ENCODE measurements at regions of chr15 and their contacts with region 1.

Region 1: GRCh38 chr15:89087830-89088604 is at the start of gene ABHD2:
- DNase-seq: peak; percentile 99 to 100
- ATAC-seq: peak; percentile 90 to 96 (median 94)
- H3K4me3 ChIP-seq: peak within 1 kb of the TSS; percentile 79 to 98 (median 90)
- H3K27ac ChIP-seq: peak within 1 kb of the TSS; percentile 91 to 98 (median 96)
- H3K4me1 ChIP-seq: peaks cover 0 to 68% (median 46%) of the 10 kb centered on the region in 9 donors
- H3K27me3 ChIP-seq: no peaks in the 10 kb centered on the region
- CTCF ChIP-seq: no peak
- total RNA-seq, gene ABHD2: 74.9 to 201 (median 123) TPM

Region 2: DNA sequence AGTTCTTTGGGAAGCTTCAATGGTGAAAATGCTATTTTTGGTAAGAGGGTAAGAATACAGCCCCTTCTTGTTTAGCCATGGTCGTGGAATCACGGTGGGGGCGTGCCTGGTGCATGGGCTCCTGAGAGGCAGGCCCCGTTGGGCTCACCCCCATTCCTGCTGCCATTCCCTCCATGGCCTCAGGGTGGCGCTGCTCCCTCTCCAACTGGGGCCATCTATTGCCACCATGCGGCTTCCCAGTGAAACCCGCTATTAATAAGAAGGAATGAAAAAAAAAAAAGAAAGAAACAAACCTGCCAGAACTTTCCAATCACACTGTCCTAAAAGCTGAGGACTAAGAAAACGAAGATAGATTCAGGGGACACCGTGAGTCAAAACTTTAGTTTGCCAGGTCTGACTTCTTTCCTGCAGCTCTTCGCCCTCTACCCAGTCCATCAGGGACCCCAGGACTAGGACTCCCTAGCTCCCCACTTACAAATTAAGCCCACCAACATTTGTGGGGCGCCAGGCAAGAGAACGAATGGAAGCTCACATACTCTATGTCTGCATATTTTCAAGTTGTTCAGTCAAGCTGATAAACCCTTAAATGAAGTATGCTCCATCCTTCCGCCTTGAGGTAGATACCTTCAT is 30.4 kb before region 1 on chr15:
- intact Hi-C with region 1: no loop called
- DNase-seq: peak; percentile 81 to 86
- ATAC-seq: peak; percentile 87 to 94 (median 92)
- H3K4me3 ChIP-seq: no peak overlapping the region
- H3K27ac ChIP-seq: no peak overlapping the region
- H3K4me1 ChIP-seq: peaks cover 0 to 12% (median 6%) of the 10 kb centered on the region in 9 donors
- H3K27me3 ChIP-seq: no peaks in the 10 kb centered on the region
- CTCF ChIP-seq: peak; percentile 98 to 99 (median 99)

Region 3: GRCh38 chr15:89101302-89102191 is 13.5 kb after region 1 on chr15:
- intact Hi-C with region 1: loop called in 1 of 10 experiments (anchors 2 kb)
- DNase-seq: peak; percentile 54 to 82
- ATAC-seq: peak; percentile 76 to 90 (median 84)
- H3K4me3 ChIP-seq: no peak overlapping the region
- H3K27ac ChIP-seq: peak overlapping the region in 9 of 10 donors; percentile 74 to 98 (median 84)
- H3K4me1 ChIP-seq: peaks cover 20 to 98% (median 89%) of the 10 kb centered on the region in 9 donors
- H3K27me3 ChIP-seq: no peaks in the 10 kb centered on the region
- CTCF ChIP-seq: no peak

Region 4: DNA sequence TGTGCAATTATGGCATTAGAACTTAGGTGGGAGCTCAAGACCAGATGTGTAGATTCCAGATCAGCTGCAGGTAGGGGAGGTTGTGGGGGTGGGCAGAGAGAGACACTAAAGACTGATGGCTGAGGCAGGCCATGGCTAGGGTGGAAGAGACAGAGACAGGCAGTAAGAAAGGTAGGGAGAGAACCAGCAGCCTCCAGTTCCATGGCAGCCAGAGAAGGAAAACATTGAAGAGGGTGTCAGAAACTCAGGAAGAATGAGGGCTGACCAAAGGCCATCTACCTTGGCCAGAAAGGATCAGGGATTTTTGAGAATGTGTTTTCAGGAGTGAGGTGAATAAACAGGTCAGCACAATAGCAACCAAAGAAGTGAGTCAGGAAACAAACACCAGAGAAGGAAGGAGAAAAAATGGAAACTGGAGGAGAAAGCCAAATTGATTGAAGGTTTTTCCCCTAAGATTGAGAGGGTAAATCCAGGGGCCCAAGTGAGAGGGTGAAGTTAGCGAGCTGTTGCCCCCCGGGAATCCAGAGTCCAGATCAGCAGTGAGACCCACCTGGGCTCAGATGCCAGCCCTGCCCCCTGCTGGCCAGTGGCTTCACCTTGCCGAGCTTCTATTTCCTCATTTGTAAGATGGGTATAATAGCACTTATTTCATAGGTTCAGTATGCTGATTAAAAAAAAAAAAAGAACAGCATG is 41.3 kb after region 1 on chr15:
- intact Hi-C with region 1: loop called in 2 of 10 experiments (anchors 5 kb)
- DNase-seq: peak in 1 of 2 donors; percentile 39
- ATAC-seq: peak in 2 of 8 donors; percentile 26 to 27
- H3K4me3 ChIP-seq: no peak overlapping the region
- H3K27ac ChIP-seq: peak overlapping the region in 7 of 10 donors; percentile 28 to 88 (median 42)
- H3K4me1 ChIP-seq: peaks cover 12 to 87% (median 65%) of the 10 kb centered on the region in 9 donors
- H3K27me3 ChIP-seq: no peaks in the 10 kb centered on the region
- CTCF ChIP-seq: peak; percentile 30 to 71 (median 61)

Region 5: DNA sequence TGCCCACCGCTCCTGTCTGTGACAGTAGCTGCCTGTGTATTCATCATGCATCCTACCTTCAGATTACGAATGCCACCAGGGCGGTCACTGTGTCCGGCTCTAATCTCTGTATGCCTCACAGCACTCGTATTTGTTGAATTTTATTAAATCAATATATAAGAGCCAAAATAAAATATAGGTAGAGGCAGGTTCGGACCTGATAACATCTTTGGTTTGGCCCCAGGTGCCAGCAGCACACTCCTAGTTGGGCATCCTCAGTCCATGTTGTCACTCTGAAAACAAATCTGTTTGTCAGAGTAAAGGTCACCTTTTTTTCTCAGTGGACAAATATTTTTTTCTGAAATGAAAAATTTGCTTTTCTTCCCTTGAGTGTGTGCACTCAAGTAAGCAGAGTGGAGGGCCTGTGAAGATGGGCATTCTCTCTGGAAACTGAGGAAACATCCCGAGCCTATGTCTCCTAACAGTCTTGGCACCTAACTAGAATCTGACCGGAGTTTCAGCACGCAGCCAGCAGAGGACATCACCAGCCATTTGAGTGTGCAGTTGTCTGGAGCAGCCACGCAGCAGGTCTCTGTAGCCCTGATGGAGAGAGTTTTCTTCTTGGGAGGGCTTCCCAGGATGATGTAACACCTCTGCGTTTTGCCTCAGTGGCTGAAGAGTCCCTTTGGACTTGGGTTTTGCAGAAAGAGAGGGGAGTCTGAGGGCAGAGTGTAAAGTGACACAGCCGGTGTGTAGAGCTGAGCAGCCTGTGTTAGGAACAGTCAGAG is 51.6 kb after region 1 on chr15:
- intact Hi-C with region 1: loop called in 6 of 10 experiments (anchors 2 to 5 kb)
- DNase-seq: no peak
- ATAC-seq: peak in 6 of 8 donors; percentile 13 to 36 (median 30)
- H3K4me3 ChIP-seq: no peak overlapping the region
- H3K27ac ChIP-seq: peak overlapping the region; percentile 15 to 88 (median 76)
- H3K4me1 ChIP-seq: peaks cover 30 to 100% (median 94%) of the 10 kb centered on the region in 9 donors
- H3K27me3 ChIP-seq: no peaks in the 10 kb centered on the region
- CTCF ChIP-seq: peak in 5 of 9 donors; percentile 15 to 42 (median 38)

Region 6: GRCh38 chr15:89157918-89158564 is 70.0 kb after region 1 on chr15:
- intact Hi-C with region 1: loop called in 1 of 10 experiments (anchors 5 kb)
- DNase-seq: no peak
- ATAC-seq: peak in 6 of 8 donors; percentile 11 to 66 (median 56)
- H3K4me3 ChIP-seq: no peak overlapping the region
- H3K27ac ChIP-seq: peak overlapping the region in 4 of 10 donors; percentile 11 to 73 (median 27)
- H3K4me1 ChIP-seq: peaks cover 6 to 50% (median 17%) of the 10 kb centered on the region in 9 donors
- H3K27me3 ChIP-seq: no peaks in the 10 kb centered on the region
- CTCF ChIP-seq: no peak

Region 7: DNA sequence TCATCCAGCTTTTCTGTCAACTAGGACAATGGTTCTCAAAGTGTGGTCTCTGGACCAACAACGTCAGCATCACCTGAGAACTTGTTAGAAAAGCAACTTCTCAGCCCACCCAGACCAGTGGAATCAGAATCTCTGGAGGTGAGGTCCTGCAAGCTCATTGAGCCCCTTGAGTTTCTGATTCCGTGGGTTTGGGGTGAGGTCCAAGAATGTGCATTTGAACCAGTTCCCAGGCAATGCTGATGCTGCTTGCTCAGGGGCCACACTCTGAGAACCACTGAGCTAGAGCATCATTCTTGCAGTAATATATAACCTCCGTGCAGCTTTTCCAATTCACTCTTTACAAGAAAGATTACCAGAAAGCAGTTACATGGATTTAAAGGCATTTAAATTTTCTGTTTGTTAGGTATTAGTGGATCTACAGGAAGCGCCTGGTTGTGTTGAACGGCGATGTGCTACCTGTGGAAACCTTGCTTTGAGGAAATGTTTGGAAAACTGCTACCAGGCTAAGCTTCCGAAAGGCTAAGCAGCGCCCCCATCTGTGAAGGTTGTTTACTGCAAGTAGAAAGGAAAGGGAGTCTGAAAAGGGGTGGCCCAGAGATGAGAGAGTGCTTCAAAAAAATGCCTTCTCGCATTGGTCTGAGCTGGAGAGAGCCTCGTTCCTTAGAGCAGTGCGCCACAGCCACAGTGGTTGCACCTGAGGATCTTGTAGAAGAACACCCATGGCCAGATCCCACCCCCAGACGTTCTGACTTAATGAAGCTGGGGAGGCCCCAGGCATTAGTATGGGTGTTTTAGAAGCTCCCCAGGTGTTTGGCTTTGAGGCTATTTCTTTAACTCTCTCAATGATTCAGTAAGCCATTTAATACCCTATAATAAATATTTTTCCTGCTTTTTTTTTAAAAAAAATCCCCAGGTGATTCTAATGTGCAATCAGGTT is 83.4 kb after region 1 on chr15:
- intact Hi-C with region 1: loop called in 3 of 10 experiments (anchors 5 to 10 kb)
- DNase-seq: peak in 1 of 2 donors; percentile 36
- ATAC-seq: peak in 2 of 8 donors; percentile 7 to 16
- H3K4me3 ChIP-seq: no peak overlapping the region
- H3K27ac ChIP-seq: no peak overlapping the region
- H3K4me1 ChIP-seq: peaks cover 0 to 61% (median 31%) of the 10 kb centered on the region in 9 donors
- H3K27me3 ChIP-seq: no peaks in the 10 kb centered on the region
- CTCF ChIP-seq: peak; percentile 39 to 76 (median 63)

Region 8: DNA sequence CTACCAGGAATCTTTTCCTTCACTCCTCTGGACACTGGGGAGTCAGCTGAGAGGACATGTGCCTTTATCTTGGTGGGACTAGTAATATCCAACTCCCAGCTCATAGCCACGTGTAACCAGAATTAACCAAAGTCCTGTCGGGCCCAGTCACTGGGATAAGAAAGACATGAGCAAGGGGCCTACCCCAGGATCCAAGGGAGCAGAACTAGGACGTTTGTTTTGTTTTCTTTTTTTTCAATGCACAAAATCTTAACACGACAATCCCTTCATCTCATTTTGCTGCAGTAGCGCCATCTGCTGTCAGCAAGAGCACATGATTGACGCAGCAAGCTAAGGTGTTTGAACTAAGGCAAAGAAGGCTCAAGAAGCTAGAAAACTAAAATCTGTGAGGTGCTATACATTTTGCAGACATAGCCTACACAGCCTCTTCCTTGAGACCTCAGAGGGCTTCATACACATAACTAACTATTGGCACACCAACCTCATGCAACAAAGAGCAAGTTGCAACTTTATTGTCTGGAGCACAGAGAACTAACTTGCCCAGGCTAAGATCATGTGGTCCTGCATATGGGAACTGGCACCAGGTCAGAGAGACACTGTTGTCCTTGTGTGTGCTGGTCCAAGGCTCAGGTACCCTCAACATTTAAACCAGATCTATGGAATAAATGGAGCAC is 89.8 kb after region 1 on chr15:
- intact Hi-C with region 1: loop called in 2 of 10 experiments (anchors 10 kb)
- DNase-seq: peak; percentile 40 to 77
- ATAC-seq: peak in 7 of 8 donors; percentile 25 to 72 (median 54)
- H3K4me3 ChIP-seq: no peak overlapping the region
- H3K27ac ChIP-seq: peak overlapping the region in 7 of 10 donors; percentile 9 to 58 (median 39)
- H3K4me1 ChIP-seq: peaks cover 0 to 53% (median 21%) of the 10 kb centered on the region in 9 donors
- H3K27me3 ChIP-seq: no peaks in the 10 kb centered on the region
- CTCF ChIP-seq: peak; percentile 56 to 90 (median 86)